ENCODE measurements at regions of chr4 and their contacts with region 1.

Region 1: DNA sequence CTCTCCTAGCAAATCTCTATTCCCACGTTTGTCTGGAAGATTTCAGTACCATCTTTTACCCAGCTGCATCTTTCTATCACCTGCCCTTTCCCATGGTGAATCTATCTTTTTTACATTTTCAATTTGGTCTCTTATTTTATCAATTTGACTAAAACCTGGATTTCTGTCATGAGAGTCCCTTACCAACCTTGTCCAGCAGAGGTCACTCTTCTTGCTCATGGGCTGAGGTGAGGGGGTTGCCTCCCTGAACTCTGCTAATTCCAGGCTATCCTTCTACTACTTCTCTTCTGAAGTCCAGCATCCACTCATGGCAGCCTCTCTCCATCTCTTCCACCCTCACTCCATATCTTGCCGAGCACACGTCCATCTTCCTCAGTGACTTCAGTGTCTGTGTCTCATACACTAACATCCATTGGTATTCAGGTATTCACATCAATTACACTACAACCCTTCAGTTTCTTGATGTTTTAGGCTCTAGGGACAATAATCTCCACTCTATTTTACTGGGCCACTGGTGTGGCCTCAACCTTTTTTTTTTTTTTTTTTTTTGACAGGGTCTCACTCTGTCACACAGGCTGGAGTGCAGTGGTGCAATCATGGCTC is 17.8 kb upstream of the ZNF827 start:
- DNase-seq: no peak
- H3K4me3 ChIP-seq: no peak overlapping the region
- H3K27ac ChIP-seq: no peak overlapping the region
- H3K4me1 ChIP-seq: no peaks in the 10 kb centered on the region
- H3K27me3 ChIP-seq: no peaks in the 10 kb centered on the region
- CTCF ChIP-seq: peak; percentile 45 to 76 (median 55)
- EP300 ChIP-seq: no peak
- POLR2A ChIP-seq: no peak

Region 2: GRCh38 chr4:146175541-146176453 is 219.4 kb after region 1 on chr4 and contains the start of gene LSM6:
- intact Hi-C with region 1: loop called (anchors 10 kb)
- DNase-seq: peak; percentile 94
- H3K4me3 ChIP-seq: peak within 1 kb of the TSS; percentile 83 to 95 (median 90)
- H3K27ac ChIP-seq: peak within 1 kb of the TSS; percentile 92 to 94 (median 93)
- H3K4me1 ChIP-seq: peaks cover 38 to 53% (median 45%) of the 10 kb centered on the region in 4 donors
- H3K27me3 ChIP-seq: no peaks in the 10 kb centered on the region
- CTCF ChIP-seq: peak in 2 of 3 experiments; percentile 12 to 22
- EP300 ChIP-seq: no peak
- POLR2A ChIP-seq: no peak
- total RNA-seq, gene LSM6: 22.7 to 30.4 (median 24.7) TPM